IMR-90 (cell line): ENCODE measurements at regions of chr12 and their contacts with region 1.

Region 1: DNA sequence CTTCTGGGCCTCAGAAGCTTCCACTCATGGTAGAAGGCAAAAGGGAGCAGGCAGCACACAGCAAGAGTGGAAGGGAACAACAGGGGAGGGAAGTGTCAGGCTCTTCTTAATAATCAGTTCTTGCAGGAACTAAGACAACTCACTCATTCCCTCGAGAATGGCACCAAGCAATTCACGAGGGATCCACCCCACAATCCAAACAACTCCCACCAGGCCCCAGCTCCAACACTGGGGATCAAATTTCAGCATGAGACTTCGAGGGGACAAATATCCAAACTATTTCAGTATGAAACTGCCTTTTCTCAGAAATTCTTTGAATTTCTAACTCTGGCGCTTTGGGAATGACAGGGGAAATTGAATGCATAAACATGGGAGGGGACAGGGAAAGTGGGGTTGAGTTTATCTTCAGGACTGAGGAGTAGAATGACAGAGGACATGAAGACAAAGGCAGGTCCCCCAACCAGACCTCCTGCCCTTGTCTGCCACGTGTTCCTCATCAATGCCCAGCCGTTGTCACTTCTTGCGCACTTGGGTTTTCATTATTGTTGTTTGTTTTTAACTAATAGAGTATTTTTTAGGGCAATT is 24.6 kb upstream of the APOF start:
- DNase-seq: peak; percentile 49
- ATAC-seq: peak; percentile 90
- H3K4me3 ChIP-seq: no peak overlapping the region
- H3K27ac ChIP-seq: peak overlapping the region; percentile 59
- H3K4me1 ChIP-seq: peaks cover 9% of the 10 kb centered on the region
- H3K27me3 ChIP-seq: peaks cover 7% of the 10 kb centered on the region
- CTCF ChIP-seq: no peak
- POLR2A ChIP-seq: no peak
- RAD21 ChIP-seq: no peak

Region 2: DNA sequence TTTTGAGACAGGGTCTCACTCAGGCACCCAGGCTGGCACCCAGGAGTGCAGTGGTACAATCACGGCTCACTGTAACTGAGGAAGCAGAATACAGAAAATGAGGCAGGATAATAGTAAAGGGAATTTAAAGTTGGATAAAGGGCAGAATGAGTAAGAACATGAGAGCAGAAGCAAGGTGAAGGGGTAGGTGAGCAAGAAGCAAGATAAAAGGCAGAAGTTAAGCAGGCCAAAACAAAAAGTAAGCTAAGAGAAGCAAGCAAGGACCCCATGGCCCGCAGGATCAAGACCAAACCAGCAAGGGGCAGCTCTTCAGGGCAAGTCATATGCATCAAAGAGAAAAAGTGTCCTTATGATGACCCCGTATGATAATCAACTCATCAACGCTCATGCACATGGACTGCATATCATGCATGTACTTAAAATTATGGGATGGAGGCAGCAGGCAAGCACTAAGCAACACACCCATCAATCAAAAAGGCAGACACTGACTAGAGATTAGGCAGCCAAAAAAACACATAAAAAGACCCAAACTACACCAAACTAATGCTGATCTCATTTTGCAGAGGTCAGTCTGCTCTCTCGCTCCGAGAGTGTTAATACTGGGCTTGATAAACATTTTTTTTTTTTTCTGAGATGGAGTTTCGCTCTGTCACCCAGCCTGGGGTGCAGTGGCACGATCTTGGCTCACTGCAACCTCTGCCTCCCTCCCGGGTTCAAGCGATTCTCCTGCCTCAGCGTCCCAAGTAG is 50.4 kb after region 1 on chr12:
- CTCF ChIA-PET with region 1: interaction called, 3 read pairs
- POLR2A ChIA-PET with region 1: no interaction called
- dilution Hi-C with region 1: no loop called
- in situ Hi-C with region 1: no loop called
- intact Hi-C with region 1: loop called (anchors 5 kb)
- DNase-seq: no peak
- ATAC-seq: no peak
- H3K4me3 ChIP-seq: no peak overlapping the region
- H3K27ac ChIP-seq: no peak overlapping the region
- H3K4me1 ChIP-seq: no peaks in the 10 kb centered on the region
- H3K27me3 ChIP-seq: no peaks in the 10 kb centered on the region
- CTCF ChIP-seq: no peak
- POLR2A ChIP-seq: no peak
- RAD21 ChIP-seq: no peak